ENCODE measurements at regions of chr22 and their contacts with region 1.

Region 1: GRCh38 chr22:38681784-38682335 is at the start of gene TOMM22:
- DNase-seq: peak; percentile 89
- H3K4me3 Mint-ChIP-seq: peak within 1 kb of the TSS; percentile 91
- H3K27ac Mint-ChIP-seq: peak within 1 kb of the TSS; percentile 93
- H3K4me1 Mint-ChIP-seq: peaks cover 21% of the 10 kb centered on the region
- H3K27me3 Mint-ChIP-seq: no peaks in the 10 kb centered on the region
- total RNA-seq, gene TOMM22: 151 to 154 TPM

Region 2: GRCh38 chr22:38656256-38657044 is 25.4 kb before region 1 on chr22 and contains the starts of genes CBY1 and FAM227A:
- CTCF ChIA-PET with region 1: interaction called, 3 read pairs
- intact Hi-C with region 1: loop called (anchors 1 kb)
- DNase-seq: peak; percentile 86
- H3K4me3 Mint-ChIP-seq: peak within 1 kb of the TSS; percentile 87
- H3K27ac Mint-ChIP-seq: peak within 1 kb of the TSS; percentile 95
- H3K4me1 Mint-ChIP-seq: peaks cover 14% of the 10 kb centered on the region
- H3K27me3 Mint-ChIP-seq: no peaks in the 10 kb centered on the region
- total RNA-seq, gene CBY1: 8.8 to 9.4 TPM
- total RNA-seq, gene FAM227A: 0.35 to 0.36 TPM

Region 3: DNA sequence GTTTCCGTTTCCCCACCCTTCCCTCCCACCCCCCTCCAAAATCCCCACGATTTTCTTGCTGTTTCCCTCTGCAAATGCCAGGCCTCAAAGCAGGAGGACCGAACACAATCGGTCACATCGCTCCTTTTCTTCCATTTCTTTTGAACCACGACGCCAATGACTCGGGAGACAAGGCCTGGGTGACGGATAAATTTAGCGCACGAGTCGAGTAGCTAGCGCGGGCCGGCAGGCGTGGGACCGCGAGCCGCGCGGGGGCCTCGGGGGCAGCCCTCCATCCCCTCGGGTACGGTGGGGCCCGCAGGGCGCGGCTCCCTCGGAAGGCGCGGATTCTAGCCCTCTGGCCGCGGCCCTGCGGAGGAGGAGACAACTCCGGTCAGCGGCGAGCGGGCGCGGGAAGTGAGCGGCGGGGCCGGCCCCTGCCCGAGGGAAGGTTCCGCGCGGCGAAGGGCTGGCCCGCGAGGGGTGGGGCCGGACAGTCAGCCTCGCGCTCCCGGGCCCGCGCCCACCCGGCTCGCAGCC is 18.5 kb after region 1 on chr22:
- CTCF ChIA-PET with region 1: interaction called, 33 read pairs
- intact Hi-C with region 1: loop called (anchors 1 kb)
- DNase-seq: peak; percentile 37
- H3K4me3 Mint-ChIP-seq: peak overlapping the region; percentile 91
- H3K27ac Mint-ChIP-seq: peak overlapping the region; percentile 93
- H3K4me1 Mint-ChIP-seq: peaks cover 59% of the 10 kb centered on the region
- H3K27me3 Mint-ChIP-seq: no peaks in the 10 kb centered on the region

Region 4: GRCh38 chr22:38777087-38777671 is 95.3 kb after region 1 on chr22:
- CTCF ChIA-PET with region 1: no interaction called
- intact Hi-C with region 1: no loop called
- DNase-seq: no peak
- H3K4me3 Mint-ChIP-seq: no peak overlapping the region
- H3K27ac Mint-ChIP-seq: no peak overlapping the region
- H3K4me1 Mint-ChIP-seq: no peaks in the 10 kb centered on the region
- H3K27me3 Mint-ChIP-seq: no peaks in the 10 kb centered on the region